PC-9 (cell line): ENCODE measurements at regions of chr6 and their contacts with region 1.

Region 1: DNA sequence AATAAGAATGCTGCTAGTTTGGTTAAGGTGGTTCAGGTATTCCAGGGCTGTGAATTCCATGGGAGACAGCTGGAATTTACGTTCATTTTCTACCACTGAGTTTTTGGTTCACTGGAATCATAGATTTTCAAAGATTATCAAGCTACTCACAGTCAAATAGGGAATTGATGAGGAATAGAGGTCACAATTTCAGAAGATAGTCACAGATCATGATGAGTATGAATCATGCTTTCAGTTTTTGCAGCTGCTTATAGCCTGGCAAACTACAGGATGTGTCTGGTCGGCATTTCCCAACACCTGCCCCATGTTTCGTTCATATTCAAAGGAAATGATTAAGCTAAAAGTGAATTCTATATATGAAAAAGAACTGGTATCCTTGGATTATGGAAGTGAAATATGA is 58.7 kb downstream of the BCKDHB start:
- DNase-seq: no peak
- H3K4me3 ChIP-seq: no peak overlapping the region
- H3K27ac ChIP-seq: peak overlapping the region; percentile 97
- H3K4me1 ChIP-seq: peaks cover 22% of the 10 kb centered on the region
- H3K27me3 ChIP-seq: no peaks in the 10 kb centered on the region
- CTCF ChIP-seq: no peak

Region 2: GRCh38 chr6:80133020-80133419 is 32.1 kb before region 1 on chr6:
- CTCF ChIA-PET with region 1: no interaction called
- POLR2A ChIA-PET with region 1: no interaction called
- intact Hi-C with region 1: no loop called
- DNase-seq: peak in 1 of 2 experiments; percentile 15
- H3K4me3 ChIP-seq: no peak overlapping the region
- H3K27ac ChIP-seq: no peak overlapping the region
- H3K4me1 ChIP-seq: peaks cover 9% of the 10 kb centered on the region
- H3K27me3 ChIP-seq: no peaks in the 10 kb centered on the region
- CTCF ChIP-seq: peak; percentile 31; the same call in 1 of the 2 replicates

Region 3: GRCh38 chr6:80151635-80152034 is 13.5 kb before region 1 on chr6:
- CTCF ChIA-PET with region 1: no interaction called
- POLR2A ChIA-PET with region 1: no interaction called
- intact Hi-C with region 1: no loop called
- DNase-seq: no peak
- H3K4me3 ChIP-seq: no peak overlapping the region
- H3K27ac ChIP-seq: no peak overlapping the region
- H3K4me1 ChIP-seq: no peaks in the 10 kb centered on the region
- H3K27me3 ChIP-seq: no peaks in the 10 kb centered on the region
- CTCF ChIP-seq: no peak

Region 4: GRCh38 chr6:81655696-81656095 is 1490.6 kb after region 1 on chr6:
- CTCF ChIA-PET with region 1: no interaction called
- POLR2A ChIA-PET with region 1: interaction called, 29 read pairs
- intact Hi-C with region 1: no loop called
- DNase-seq: no peak
- H3K4me3 ChIP-seq: no peak overlapping the region
- H3K27ac ChIP-seq: no peak overlapping the region
- H3K4me1 ChIP-seq: no peaks in the 10 kb centered on the region
- H3K27me3 ChIP-seq: no peaks in the 10 kb centered on the region
- CTCF ChIP-seq: no peak